ENCODE measurements at regions of chr4 and their contacts with region 1.

Region 1: DNA sequence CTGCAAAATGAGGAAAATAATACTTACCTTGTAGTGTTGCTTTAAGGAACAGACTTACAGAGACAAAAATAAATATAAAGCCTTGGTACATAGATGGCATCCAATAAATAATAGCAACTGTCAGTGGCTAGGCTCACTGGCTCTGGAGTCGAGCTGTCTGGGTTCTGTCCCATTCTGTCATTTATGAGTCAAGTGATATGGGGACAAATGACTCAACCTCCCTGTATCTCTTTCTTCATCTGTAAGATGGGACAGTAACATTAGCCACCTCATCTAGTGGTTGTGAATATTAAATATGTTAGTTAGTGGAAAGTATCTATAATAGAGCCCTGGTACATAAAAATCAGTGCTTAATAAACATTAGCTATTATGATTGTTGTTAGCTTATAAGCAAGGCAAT is 16.7 kb upstream of the GATB start:
- DNase-seq: no peak
- H3K4me3 ChIP-seq: no peak overlapping the region
- H3K27me3 ChIP-seq: no peaks in the 10 kb centered on the region
- CTCF ChIP-seq: no peak

Region 2: DNA sequence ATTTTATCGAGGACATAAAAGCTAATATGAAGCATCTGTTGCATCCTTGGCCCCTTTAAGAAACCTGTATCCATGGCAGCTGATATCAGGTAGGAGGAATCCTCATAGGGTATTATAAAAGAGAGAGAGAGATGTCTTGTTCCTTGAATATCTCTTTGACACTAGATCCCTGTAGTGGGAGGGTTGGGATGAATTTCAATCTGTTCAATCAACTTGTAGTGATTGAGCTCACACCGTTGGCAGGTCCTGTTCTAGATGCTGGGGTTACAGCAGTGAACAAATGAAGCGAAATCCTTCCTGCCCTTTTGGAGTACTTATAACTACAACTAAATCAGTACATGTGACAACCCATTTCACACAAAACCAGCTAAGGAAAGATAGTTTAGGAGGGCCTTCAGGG is 18.6 kb after region 1 on chr4:
- CTCF ChIA-PET with region 1: interaction called, 3 read pairs
- POLR2A ChIA-PET with region 1: interaction called, 11 read pairs
- DNase-seq: no peak
- H3K4me3 ChIP-seq: no peak overlapping the region
- H3K27me3 ChIP-seq: peaks cover 2% of the 10 kb centered on the region; the same call in 1 of the 2 replicates
- CTCF ChIP-seq: no peak

Measured in BJ (cell line).